Common myeloid progenitor, CD34-positive (primary cell): ENCODE measurements at regions of chr2 and their contacts with region 1.

Region 1: GRCh38 chr2:36775261-36775660 is 78.8 kb downstream of the VIT start:
- DNase-seq: no peak
- H3K4me3 ChIP-seq: no peak overlapping the region
- H3K27ac ChIP-seq: no peak overlapping the region
- H3K4me1 ChIP-seq: no peaks in the 10 kb centered on the region
- H3K27me3 ChIP-seq: no peaks in the 10 kb centered on the region

Region 2: DNA sequence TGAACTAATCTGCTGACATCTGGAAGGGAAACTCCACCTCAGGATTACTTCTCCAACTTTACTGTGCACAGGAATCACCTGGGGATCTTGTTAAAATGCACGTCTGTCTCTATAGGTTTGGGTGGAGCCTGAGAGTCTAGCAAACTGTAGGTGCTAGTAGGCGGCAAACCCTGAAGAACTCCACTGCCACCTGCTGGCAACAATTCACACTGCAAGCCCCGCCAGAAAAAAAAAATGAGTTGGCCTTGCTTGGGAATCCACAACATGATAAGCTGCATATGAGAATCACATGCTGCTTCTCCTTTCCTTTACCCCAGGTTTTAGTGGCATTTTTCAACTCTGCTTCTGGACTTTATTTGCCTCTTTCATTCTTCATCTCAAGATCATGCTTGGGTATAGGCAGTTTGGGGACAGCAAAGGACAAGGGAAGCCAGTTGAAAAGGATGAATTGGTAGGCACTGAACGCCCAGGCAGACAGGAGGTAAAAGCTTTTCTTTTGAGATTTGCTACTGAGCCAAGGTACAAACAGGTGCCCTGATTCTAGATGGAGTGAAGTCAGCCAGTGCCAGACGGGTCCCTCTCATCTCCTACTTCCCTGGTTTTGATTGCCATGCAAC is 10.0 kb after region 1 on chr2:
- CTCF ChIA-PET with region 1: interaction called, 15 read pairs
- POLR2A ChIA-PET with region 1: no interaction called
- DNase-seq: peak; percentile 64 to 80 (median 74)
- H3K4me3 ChIP-seq: no peak overlapping the region
- H3K27ac ChIP-seq: no peak overlapping the region
- H3K4me1 ChIP-seq: peaks cover 0 to 11% (median 9%) of the 10 kb centered on the region in 4 experiments
- H3K27me3 ChIP-seq: no peaks in the 10 kb centered on the region